HCT116 (cell line): ENCODE measurements at regions of chr12 and their contacts with region 1.

Region 1: DNA sequence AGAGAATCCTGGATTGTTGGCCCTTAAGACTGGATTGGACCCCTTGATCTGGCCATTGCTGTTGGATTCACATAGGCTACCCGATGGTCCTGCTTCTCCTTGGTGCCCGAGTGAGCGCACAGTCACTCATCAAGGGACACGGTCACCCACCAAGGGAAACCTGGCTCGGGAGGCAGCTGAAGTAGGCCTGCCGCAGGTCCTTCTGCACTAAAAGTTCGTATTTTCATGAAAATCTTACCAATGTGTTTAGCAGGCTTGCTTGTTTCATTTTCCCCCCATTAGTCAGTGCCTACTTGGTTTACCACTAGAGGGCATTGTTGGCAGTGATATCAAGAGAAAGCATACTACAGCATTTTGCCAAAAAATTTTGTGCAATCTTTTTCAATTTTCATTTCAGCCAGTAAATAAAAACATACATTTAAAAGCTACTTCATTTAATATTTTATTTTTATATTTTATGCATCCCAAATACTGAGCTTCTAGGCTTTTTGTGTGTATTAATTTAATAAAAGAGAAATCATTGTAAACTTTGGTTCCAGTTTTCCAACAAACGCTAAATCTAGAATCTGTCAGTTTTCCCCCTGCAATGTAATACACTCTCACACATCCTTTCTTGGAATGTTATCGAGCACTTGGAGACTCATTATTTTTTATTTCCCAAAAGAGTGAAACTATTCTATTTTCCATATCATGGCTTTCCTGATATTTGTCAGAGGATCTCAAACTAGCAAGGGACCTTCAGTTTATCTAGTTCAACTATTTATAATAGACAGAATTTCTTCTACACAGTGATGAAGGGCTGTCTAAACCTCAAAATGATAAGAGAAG is 116.7 kb downstream of the LMNTD1 start:
- DNase-seq: peak; percentile 70
- ATAC-seq: peak; percentile 83
- H3K4me3 ChIP-seq: peak overlapping the region; percentile 39 to 61
- H3K27ac ChIP-seq: no peak overlapping the region
- H3K4me1 ChIP-seq: peaks cover 16 to 26% of the 10 kb centered on the region in 2 experiments
- H3K27me3 ChIP-seq: no peaks in the 10 kb centered on the region
- CTCF ChIP-seq: peak; percentile 71 to 86 (median 86); a peak in 5 of 6 replicates
- POLR2A ChIP-seq: no peak
- RAD21 ChIP-seq: peak; percentile 88

Region 2: GRCh38 chr12:25135531-25136154 is 300.8 kb before region 1 on chr12:
- CTCF ChIA-PET with region 1: no interaction called
- POLR2A ChIA-PET with region 1: no interaction called
- RAD21 ChIA-PET with region 1: no interaction called
- intact Hi-C with region 1: no loop called
- DNase-seq: peak; percentile 8
- ATAC-seq: peak; percentile 61
- H3K4me3 ChIP-seq: no peak overlapping the region
- H3K27ac ChIP-seq: no peak overlapping the region
- H3K4me1 ChIP-seq: no peaks in the 10 kb centered on the region
- H3K27me3 ChIP-seq: no peaks in the 10 kb centered on the region
- CTCF ChIP-seq: peak; percentile 6 to 40 (median 20); a peak in 3 of 6 replicates
- POLR2A ChIP-seq: no peak
- RAD21 ChIP-seq: no peak

Region 3: DNA sequence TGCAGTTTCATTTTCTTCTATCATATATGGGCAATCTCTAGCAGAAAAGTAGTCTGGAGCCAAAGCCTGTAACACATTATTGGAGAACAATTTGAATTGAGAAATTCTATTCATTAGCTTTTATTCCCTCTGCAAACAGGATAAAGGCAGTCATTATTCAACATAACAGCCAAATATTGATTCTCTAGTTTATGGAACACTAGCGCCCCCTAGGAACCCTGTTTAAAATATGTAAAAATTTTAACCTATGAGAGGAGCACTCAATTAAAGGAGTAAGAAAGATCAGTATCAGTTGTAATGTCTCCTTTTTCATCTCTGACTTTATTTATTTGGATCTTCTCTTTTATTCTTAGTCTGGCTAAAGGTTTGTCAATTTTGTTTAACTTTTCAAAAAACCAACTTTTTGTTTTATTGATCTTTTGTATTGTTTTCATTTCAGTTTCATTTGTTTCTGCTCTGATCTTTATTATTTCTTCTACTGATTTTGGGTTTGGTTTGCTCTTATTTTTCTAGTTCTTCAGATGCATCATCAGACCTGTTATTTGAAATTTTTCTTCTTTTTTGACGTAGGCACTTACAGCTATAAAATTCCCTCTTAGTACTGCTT is 121.5 kb after region 1 on chr12:
- CTCF ChIA-PET with region 1: interaction called, 17 read pairs
- POLR2A ChIA-PET with region 1: no interaction called
- RAD21 ChIA-PET with region 1: no interaction called
- intact Hi-C with region 1: loop called (anchors 1 kb)
- DNase-seq: peak; percentile 54
- ATAC-seq: peak; percentile 49
- H3K4me3 ChIP-seq: no peak overlapping the region
- H3K27ac ChIP-seq: no peak overlapping the region
- H3K4me1 ChIP-seq: no peaks in the 10 kb centered on the region
- H3K27me3 ChIP-seq: no peaks in the 10 kb centered on the region
- CTCF ChIP-seq: peak; percentile 60 to 73 (median 60); a peak in 5 of 6 replicates
- POLR2A ChIP-seq: no peak
- RAD21 ChIP-seq: peak; percentile 73

Region 4: DNA sequence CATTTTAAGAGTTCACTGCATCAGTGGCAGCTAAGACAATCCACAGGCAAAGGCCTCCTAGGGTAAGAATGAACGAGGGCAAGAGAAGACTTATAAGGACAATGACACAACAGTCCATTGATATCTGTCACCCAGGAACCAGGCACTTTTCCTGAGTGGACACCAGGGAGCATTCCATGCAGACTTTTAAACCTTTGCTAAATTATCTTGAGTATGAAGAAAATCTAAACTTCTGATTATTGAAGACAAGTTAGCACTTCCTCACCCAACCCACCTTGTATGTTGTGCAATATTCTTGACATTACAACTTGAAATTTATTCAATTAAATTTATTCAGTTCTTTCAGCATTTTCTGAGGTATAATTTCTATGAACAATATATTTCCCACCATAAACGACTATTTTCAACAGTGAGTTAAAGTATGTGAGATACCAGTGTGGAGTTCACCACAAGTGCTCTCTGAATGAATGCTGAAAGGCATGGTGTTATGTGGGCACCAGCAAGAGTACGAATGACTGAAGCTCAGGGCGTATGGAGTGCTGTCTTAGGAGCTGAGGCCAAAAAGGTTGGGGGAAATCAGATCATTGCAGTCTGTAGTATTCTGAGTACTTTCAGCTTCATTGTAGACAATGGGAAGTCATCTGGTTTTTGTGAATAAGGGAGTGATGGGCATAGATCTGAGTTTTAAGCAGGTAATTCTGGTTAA is 241.0 kb after region 1 on chr12:
- CTCF ChIA-PET with region 1: no interaction called
- POLR2A ChIA-PET with region 1: no interaction called
- RAD21 ChIA-PET with region 1: no interaction called
- intact Hi-C with region 1: loop called (anchors 5 kb)
- DNase-seq: no peak
- ATAC-seq: no peak
- H3K4me3 ChIP-seq: no peak overlapping the region
- H3K27ac ChIP-seq: no peak overlapping the region
- H3K4me1 ChIP-seq: no peaks in the 10 kb centered on the region
- H3K27me3 ChIP-seq: no peaks in the 10 kb centered on the region
- CTCF ChIP-seq: peak in 2 of 3 experiments; percentile 12 to 29; a peak in 2 of 6 replicates
- POLR2A ChIP-seq: no peak
- RAD21 ChIP-seq: peak; percentile 53; the same call in 1 of the 2 replicates

Region 5: GRCh38 chr12:26028953-26029735 is 592.7 kb after region 1 on chr12:
- CTCF ChIA-PET with region 1: interaction called, 4 read pairs
- POLR2A ChIA-PET with region 1: no interaction called
- RAD21 ChIA-PET with region 1: no interaction called
- intact Hi-C with region 1: loop called (anchors 1 kb)
- DNase-seq: peak; percentile 40
- ATAC-seq: peak; percentile 68
- H3K4me3 ChIP-seq: no peak overlapping the region
- H3K27ac ChIP-seq: no peak overlapping the region
- H3K4me1 ChIP-seq: no peaks in the 10 kb centered on the region
- H3K27me3 ChIP-seq: no peaks in the 10 kb centered on the region
- CTCF ChIP-seq: peak; percentile 65 to 82 (median 70)
- POLR2A ChIP-seq: no peak
- RAD21 ChIP-seq: peak; percentile 78